Transverse colon (tissue), 4 donors: ENCODE measurements at regions of chr2 and their contacts with region 1.

Region 1: DNA sequence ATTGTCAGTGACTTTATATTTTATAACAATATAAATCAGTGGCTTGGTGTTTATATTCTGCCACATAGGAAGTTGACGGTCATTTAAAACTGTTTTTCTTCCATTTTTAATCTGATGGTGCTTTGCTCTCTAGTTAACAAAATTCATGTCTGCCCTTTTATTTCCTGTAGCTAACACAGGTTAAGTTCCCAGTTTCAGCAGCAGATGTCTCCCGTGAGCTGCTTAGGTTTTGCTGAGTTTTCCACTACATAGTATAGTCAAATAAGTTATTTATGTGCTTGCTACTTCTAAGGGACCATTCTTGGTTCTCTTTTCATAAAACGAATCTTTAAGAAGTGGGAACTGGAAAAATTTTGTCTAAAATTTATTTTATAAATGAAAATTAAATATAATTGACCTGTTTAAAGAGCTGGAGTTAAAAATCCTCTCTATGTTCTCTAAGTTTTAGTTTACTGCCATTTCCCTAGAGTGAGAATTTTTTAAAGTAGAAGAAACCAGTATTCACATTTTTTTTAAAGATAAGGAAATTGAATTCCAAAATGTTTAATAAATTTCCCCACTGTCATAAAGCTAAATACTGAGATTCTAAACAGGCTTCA is 20.6 kb downstream of the HTR2B start:
- DNase-seq: peak; percentile 75
- H3K4me3 ChIP-seq: no peak overlapping the region
- H3K27ac ChIP-seq: peak overlapping the region; percentile 54 to 60 (median 58)
- H3K4me1 ChIP-seq: peaks cover 3 to 37% (median 20%) of the 10 kb centered on the region in 4 donors
- H3K27me3 ChIP-seq: no peaks in the 10 kb centered on the region
- CTCF ChIP-seq: peak; percentile 83 to 91 (median 85)
- EP300 ChIP-seq: no peak
- POLR2A ChIP-seq: no peak

Region 2: GRCh38 chr2:231191896-231192872 is 88.0 kb after region 1 on chr2:
- in situ Hi-C with region 1: loop called in 2 of 4 experiments (anchors 5 to 10 kb)
- intact Hi-C with region 1: no loop called
- DNase-seq: peak; percentile 67
- H3K4me3 ChIP-seq: no peak overlapping the region
- H3K27ac ChIP-seq: peak overlapping the region; percentile 65 to 90 (median 84)
- H3K4me1 ChIP-seq: peaks cover 0 to 22% (median 16%) of the 10 kb centered on the region in 4 donors
- H3K27me3 ChIP-seq: no peaks in the 10 kb centered on the region
- CTCF ChIP-seq: peak; percentile 45 to 73 (median 50)
- EP300 ChIP-seq: peak; percentile 87
- POLR2A ChIP-seq: no peak

Region 3: DNA sequence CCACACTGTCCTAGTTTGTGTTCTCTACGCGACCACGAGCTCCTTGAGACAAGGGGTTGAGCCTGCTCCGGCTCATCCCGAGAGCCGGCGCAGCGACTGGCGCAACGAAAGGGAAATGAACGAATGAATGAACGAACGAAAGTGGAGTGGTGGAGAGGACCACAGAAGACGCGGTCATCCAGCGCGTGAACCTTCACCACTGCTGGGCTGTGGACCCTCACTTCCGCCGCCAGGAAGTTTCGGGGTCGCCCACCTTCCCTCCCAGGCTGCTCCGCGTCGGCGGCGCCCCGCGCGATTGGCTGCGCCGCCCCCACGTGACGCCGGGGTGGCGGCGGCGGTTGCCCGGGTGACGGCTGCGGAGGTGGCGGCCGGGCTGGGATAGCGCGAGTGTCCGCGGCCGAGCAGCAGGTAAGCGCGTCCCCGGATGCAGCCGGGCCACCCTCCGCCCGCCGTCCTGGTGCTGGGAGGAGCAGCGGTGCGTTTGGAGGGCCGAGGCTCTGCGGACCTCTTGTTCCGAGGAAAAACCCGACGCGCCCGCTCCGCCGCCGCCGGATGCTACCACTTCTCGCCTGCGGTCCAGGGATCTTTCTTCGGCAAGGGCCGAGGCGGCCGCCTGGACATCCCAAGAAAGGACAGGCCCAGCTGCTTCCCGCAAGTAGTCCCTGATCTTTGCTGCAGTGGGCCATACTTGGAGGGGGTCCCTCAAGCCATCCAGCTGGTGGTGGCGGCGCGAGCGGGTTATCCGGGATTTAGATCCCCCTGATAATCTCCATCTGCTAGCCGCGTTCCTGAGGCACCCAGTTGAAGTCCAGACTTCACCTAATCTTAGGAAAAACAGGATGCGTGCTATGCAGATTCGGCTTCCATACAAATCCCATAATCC is 94.3 kb after region 1 on chr2 and contains the start of gene ARMC9:
- in situ Hi-C with region 1: loop called in 3 of 4 experiments (anchors 5 to 10 kb)
- intact Hi-C with region 1: no loop called
- DNase-seq: peak; percentile 81
- H3K4me3 ChIP-seq: peak within 1 kb of the TSS; percentile 62 to 82 (median 74)
- H3K27ac ChIP-seq: peak within 1 kb of the TSS; percentile 69 to 83 (median 78)
- H3K4me1 ChIP-seq: peaks cover 6 to 17% (median 11%) of the 10 kb centered on the region in 4 donors
- H3K27me3 ChIP-seq: no peaks in the 10 kb centered on the region
- CTCF ChIP-seq: no peak
- EP300 ChIP-seq: no peak
- POLR2A ChIP-seq: peak; percentile 27
- total RNA-seq, gene ARMC9: 11.5 to 59.5 (median 14.4) TPM

Region 4: GRCh38 chr2:231297108-231297908 is 193.1 kb after region 1 on chr2:
- in situ Hi-C with region 1: no loop called
- intact Hi-C with region 1: loop called (anchors 10 kb)
- DNase-seq: peak; percentile 68
- H3K4me3 ChIP-seq: no peak overlapping the region
- H3K27ac ChIP-seq: peak overlapping the region in 1 of 4 donors; percentile 24
- H3K4me1 ChIP-seq: peaks cover 0 to 30% (median 18%) of the 10 kb centered on the region in 4 donors
- H3K27me3 ChIP-seq: no peaks in the 10 kb centered on the region
- CTCF ChIP-seq: peak; percentile 59 to 80 (median 76)
- EP300 ChIP-seq: no peak
- POLR2A ChIP-seq: no peak

Region 5: GRCh38 chr2:231411831-231412617 is 307.8 kb after region 1 on chr2:
- in situ Hi-C with region 1: loop called in 2 of 4 experiments (anchors 10 to 25 kb)
- intact Hi-C with region 1: loop called (anchors 5 kb)
- DNase-seq: peak; percentile 94
- H3K4me3 ChIP-seq: peak overlapping the region; percentile 43 to 61 (median 48)
- H3K27ac ChIP-seq: peak overlapping the region; percentile 80 to 84 (median 82)
- H3K4me1 ChIP-seq: peaks cover 6 to 46% (median 28%) of the 10 kb centered on the region in 4 donors
- H3K27me3 ChIP-seq: no peaks in the 10 kb centered on the region
- CTCF ChIP-seq: peak; percentile 75 to 88 (median 85)
- EP300 ChIP-seq: no peak
- POLR2A ChIP-seq: peak; percentile 50

Region 6: DNA sequence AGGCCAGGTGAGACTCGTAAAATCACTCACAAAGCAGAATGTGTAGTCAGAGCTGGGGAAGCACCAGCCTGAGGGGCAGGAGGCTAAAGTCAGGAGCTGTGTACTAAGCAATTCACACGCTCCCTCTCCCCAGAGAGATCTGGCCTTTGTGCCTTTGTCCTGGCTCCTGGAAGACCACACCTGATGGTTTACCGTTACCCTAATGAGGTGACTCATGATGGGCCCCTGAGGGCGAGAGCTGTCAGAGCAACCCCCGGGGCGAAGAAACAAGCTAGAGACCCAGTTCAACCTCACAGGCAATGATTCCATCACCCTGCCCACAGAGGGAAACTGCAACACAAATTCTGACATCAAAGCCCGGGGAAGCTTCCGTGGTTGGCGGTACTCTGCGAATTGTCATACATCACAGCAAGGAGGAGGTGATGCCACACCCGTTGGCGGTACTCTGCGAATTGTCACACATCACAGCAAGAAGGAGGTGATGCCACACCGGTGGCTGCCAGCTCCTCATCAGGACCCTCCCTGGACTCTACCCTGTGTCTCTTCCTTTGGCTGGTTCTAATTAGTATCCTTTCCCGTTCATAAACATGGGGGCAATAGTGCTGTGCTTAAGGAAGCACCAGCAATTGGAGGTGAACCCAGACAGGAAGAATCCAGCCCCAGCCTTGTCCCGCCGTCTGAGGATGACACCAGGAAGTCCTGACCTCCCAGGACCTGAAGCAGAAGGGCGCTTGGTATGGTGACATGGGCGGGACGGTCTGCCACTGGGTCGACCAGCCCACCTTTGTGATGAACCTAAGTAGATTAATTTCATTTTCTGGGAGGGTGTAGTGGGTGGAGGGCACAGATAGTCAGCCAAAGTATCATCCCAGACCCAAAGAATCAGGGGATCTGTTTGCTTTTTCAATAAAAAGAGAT is 321.9 kb after region 1 on chr2:
- in situ Hi-C with region 1: loop called in 2 of 4 experiments (anchors 25 kb)
- intact Hi-C with region 1: no loop called
- DNase-seq: no peak
- H3K4me3 ChIP-seq: no peak overlapping the region
- H3K27ac ChIP-seq: no peak overlapping the region
- H3K4me1 ChIP-seq: no peaks in the 10 kb centered on the region
- H3K27me3 ChIP-seq: no peaks in the 10 kb centered on the region
- CTCF ChIP-seq: no peak
- EP300 ChIP-seq: no peak
- POLR2A ChIP-seq: no peak

Region 7: DNA sequence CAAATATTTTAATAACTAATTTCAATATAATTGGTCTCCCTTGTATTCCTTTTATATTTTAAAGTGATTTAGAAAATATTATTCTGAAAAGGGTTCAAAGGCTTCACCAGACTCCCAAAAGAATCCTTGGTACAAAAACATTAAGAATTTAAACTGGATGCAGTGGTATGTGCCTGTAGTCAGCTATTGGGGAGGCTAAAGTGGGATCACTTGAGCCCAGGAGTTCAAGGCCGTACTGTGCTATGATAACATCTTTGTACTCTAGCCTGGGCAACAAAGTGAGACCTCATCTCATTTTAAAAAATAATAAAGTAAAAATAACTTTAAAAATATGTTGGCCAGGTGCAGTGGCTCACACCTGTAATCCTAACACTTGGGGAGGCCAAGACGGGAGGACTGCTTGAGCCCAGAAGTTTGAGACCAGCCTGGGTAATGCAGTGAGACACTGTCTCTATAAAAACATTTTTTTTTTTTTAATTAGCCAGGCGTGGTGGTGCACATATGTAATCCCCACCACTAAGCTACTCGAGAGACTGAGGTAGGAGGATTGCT is 345.4 kb after region 1 on chr2:
- in situ Hi-C with region 1: loop called in 2 of 4 experiments (anchors 10 to 25 kb)
- intact Hi-C with region 1: no loop called
- DNase-seq: no peak
- H3K4me3 ChIP-seq: no peak overlapping the region
- H3K27ac ChIP-seq: no peak overlapping the region
- H3K4me1 ChIP-seq: no peaks in the 10 kb centered on the region
- H3K27me3 ChIP-seq: no peaks in the 10 kb centered on the region
- CTCF ChIP-seq: no peak
- EP300 ChIP-seq: no peak
- POLR2A ChIP-seq: no peak